CD4-positive, alpha-beta T cell (primary cell): ENCODE measurements at regions of chr1 and their contacts with region 1.

Region 1: GRCh38 chr1:242613266-242613815 is 88.8 kb upstream of the PLD5 start:
- DNase-seq: no peak
- ATAC-seq: no peak
- H3K4me3 ChIP-seq: no peak overlapping the region
- H3K4me3 Mint-ChIP-seq: no peak overlapping the region
- H3K27ac ChIP-seq: no peak overlapping the region
- H3K27ac Mint-ChIP-seq: no peak overlapping the region
- H3K4me1 ChIP-seq: no peaks in the 10 kb centered on the region
- H3K4me1 Mint-ChIP-seq: no peaks in the 10 kb centered on the region
- H3K27me3 ChIP-seq: no peaks in the 10 kb centered on the region
- H3K27me3 Mint-ChIP-seq: peaks cover 4% of the 10 kb centered on the region
- CTCF ChIP-seq: no peak

Region 2: DNA sequence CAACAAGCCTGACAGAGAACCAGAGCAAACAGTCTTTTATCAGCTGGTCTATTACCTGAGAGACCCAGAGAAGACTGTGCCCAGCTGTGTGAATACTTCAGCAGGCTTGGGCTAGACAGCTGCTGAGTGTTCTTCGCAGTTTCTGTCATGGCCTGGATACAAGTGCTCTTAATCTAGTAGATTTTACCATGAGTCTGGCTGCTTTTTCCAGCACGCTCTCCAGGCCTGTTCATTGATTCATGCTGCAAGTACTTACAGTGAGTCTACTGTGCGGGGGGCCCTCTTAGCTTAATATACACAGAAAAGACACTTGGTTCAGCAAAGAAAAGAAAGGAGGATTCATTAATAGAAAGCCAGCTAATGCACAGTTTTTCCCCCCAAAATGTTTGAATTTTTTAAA is 1304.9 kb before region 1 on chr1:
- CTCF ChIA-PET with region 1: no interaction called
- POLR2A ChIA-PET with region 1: no interaction called
- intact Hi-C with region 1: loop called in 1 of 2 experiments (anchors 5 kb)
- DNase-seq: no peak
- ATAC-seq: no peak
- H3K4me3 ChIP-seq: no peak overlapping the region
- H3K4me3 Mint-ChIP-seq: no peak overlapping the region
- H3K27ac ChIP-seq: no peak overlapping the region
- H3K27ac Mint-ChIP-seq: no peak overlapping the region
- H3K4me1 ChIP-seq: no peaks in the 10 kb centered on the region
- H3K4me1 Mint-ChIP-seq: no peaks in the 10 kb centered on the region
- H3K27me3 ChIP-seq: no peaks in the 10 kb centered on the region
- H3K27me3 Mint-ChIP-seq: no peaks in the 10 kb centered on the region
- CTCF ChIP-seq: no peak

Region 3: GRCh38 chr1:241375886-241376285 is 1237.5 kb before region 1 on chr1:
- CTCF ChIA-PET with region 1: no interaction called
- POLR2A ChIA-PET with region 1: no interaction called
- intact Hi-C with region 1: no loop called
- DNase-seq: no peak
- ATAC-seq: no peak
- H3K4me3 ChIP-seq: no peak overlapping the region
- H3K4me3 Mint-ChIP-seq: no peak overlapping the region
- H3K27ac ChIP-seq: no peak overlapping the region
- H3K27ac Mint-ChIP-seq: no peak overlapping the region
- H3K4me1 ChIP-seq: no peaks in the 10 kb centered on the region
- H3K4me1 Mint-ChIP-seq: no peaks in the 10 kb centered on the region
- H3K27me3 ChIP-seq: no peaks in the 10 kb centered on the region
- H3K27me3 Mint-ChIP-seq: no peaks in the 10 kb centered on the region
- CTCF ChIP-seq: no peak

Region 4: DNA sequence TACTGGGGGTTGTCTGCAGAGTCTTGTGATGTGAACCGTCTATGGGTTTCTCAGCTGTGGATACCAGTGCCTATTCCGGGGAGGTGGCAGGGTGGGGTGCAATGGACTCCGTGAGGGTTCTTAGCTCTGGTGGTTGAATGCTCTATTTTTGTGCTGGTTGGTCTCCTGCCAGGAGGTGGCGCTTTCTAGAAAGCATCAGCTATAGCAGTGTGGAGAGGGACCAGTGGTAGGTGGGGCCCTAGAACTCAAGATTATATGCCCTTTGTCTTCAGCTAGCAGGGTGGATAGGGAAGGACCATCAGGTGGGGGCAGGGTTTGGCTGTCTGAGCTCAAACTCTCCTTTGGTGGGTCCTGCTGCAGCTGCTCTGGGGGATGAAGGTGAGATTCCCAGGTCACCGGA is 38.5 kb after region 1 on chr1:
- CTCF ChIA-PET with region 1: no interaction called
- POLR2A ChIA-PET with region 1: no interaction called
- intact Hi-C with region 1: no loop called
- DNase-seq: no peak
- ATAC-seq: no peak
- H3K4me3 ChIP-seq: no peak overlapping the region
- H3K4me3 Mint-ChIP-seq: no peak overlapping the region
- H3K27ac ChIP-seq: no peak overlapping the region
- H3K27ac Mint-ChIP-seq: no peak overlapping the region
- H3K4me1 ChIP-seq: no peaks in the 10 kb centered on the region
- H3K4me1 Mint-ChIP-seq: no peaks in the 10 kb centered on the region
- H3K27me3 ChIP-seq: no peaks in the 10 kb centered on the region
- H3K27me3 Mint-ChIP-seq: no peaks in the 10 kb centered on the region
- CTCF ChIP-seq: no peak